Posterior cingulate gyrus (tissue), 11 donors: ENCODE measurements at regions of chr6 and their contacts with region 1.

Region 1: DNA sequence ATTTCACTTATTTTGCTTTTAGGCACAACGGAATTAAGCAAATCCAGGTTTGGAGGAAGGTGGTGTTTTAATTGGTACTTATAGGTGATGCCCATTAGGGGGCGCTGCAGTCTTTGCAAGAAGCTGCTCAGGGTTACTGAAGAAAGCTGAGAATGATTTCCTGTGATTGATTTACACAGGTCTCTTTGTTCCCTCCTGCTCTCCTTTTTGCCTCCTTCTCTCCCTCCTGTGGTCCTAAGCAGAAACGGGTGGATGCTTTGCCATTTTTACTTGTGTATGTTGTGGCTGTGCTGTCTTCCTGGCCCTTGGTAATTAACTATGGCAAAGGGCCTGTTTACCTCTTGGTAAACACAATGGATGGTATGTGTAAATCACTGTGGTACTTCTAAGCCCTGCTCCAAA is 97.8 kb downstream of the ANKS1A start:
- DNase-seq: peak in 8 of 10 donors; percentile 21 to 95 (median 72)

Region 2: DNA sequence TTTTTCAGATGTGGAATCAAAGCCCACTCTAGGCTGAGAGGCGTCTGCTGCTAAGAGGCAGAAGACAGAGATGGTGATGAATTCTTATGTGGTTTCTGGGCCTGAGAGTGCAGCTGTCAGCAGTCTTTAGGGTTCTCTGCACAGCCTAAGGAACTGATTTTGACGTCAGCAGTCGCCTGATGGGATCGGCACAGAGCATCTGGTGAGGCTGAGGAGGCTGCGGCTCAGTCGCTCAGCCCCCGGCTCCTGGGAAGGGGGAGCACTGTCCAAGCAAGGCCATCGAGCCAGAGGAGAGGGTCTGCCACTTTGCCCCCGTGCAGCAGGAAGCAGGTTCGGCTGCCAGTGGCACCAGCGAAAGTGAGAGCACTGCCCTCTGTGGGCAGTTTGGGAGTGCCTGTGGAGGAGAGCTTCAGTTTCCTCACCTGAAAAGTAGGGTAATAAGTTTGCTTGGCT is 61.8 kb after region 1 on chr6:
- intact Hi-C with region 1: loop called (anchors 2 kb)
- DNase-seq: peak in 9 of 10 donors; percentile 37 to 95 (median 63)

Region 3: GRCh38 chr6:35128496-35128895 is 141.7 kb after region 1 on chr6:
- intact Hi-C with region 1: no loop called
- DNase-seq: no peak

Region 4: GRCh38 chr6:35139908-35140655 is 153.2 kb after region 1 on chr6:
- intact Hi-C with region 1: loop called (anchors 1 kb)
- DNase-seq: peak in 6 of 10 donors; percentile 24 to 89 (median 56)

Region 5: DNA sequence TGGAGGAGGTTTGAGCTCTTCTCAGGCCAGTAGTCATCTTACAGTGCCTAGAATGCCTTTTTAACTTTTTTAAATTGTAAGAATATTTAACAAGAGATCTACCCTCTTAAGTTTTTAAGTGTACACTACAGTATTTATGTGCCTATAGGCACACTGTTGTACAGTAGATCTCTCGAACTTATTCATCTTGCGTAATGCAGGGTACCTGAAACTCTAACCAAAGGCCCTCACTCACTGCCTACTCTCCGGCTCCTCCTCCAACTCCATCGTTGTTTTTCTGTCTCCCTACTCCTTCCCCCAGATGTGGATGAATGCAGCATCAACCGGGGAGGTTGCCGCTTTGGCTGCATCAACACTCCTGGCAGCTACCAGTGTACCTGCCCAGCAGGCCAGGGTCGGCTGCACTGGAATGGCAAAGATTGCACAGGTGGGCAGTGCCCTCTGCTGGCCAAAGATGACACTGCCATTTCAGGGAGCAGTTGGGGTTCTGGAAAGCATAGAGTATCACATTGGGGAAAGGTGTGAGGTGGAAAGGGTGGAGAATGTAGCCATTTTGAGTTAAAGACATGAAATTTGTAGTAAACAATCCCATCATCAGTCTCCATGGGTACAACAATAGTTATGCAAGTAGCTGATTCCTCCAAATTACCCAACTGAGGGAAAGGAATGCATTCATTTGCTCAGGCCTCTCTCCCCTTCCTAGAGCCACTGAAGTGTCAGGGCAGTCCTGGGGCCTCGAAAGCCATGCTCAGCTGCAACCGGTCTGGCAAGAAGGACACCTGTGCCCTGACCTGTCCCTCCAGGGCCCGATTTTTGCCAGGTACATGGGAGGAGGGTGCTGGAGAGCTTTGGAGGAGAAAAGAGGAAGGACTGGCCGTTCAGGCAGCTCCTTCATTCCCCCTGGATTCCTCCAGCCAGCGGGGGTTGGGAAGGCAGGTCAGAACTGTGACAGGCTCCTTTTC is 254.3 kb after region 1 on chr6:
- intact Hi-C with region 1: loop called (anchors 10 kb)
- DNase-seq: peak; percentile 50 to 95 (median 82)